ENCODE measurements at regions of chr21 and their contacts with region 1.

Region 1: GRCh38 chr21:25801217-25802014 is 66.6 kb downstream of the GABPA start:
- DNase-seq: peak; percentile 95
- ATAC-seq: peak; percentile 100
- H3K4me3 Mint-ChIP-seq: no peak overlapping the region
- H3K27ac Mint-ChIP-seq: no peak overlapping the region
- H3K4me1 Mint-ChIP-seq: peaks cover 5% of the 10 kb centered on the region
- H3K27me3 Mint-ChIP-seq: peaks cover 6% of the 10 kb centered on the region

Region 2: GRCh38 chr21:25639551-25640201 is 161.7 kb before region 1 on chr21:
- CTCF ChIA-PET with region 1: interaction called, 5 read pairs
- POLR2A ChIA-PET with region 1: no interaction called
- intact Hi-C with region 1: loop called in 1 of 2 experiments (anchors 10 kb)
- DNase-seq: peak; percentile 63
- ATAC-seq: peak; percentile 76
- H3K4me3 Mint-ChIP-seq: peak overlapping the region; percentile 62
- H3K27ac Mint-ChIP-seq: no peak overlapping the region
- H3K4me1 Mint-ChIP-seq: peaks cover 28% of the 10 kb centered on the region
- H3K27me3 Mint-ChIP-seq: peaks cover 47% of the 10 kb centered on the region

Region 3: GRCh38 chr21:25734904-25735645 is 66.3 kb before region 1 on chr21 and contains the starts of genes ATP5PF and GABPA:
- CTCF ChIA-PET with region 1: interaction called, 12 read pairs
- POLR2A ChIA-PET with region 1: no interaction called
- intact Hi-C with region 1: loop called (anchors 1 to 2 kb)
- DNase-seq: peak; percentile 99
- ATAC-seq: peak; percentile 94
- H3K4me3 Mint-ChIP-seq: peak within 1 kb of the TSS; percentile 98
- H3K27ac Mint-ChIP-seq: peak within 1 kb of the TSS; percentile 100
- H3K4me1 Mint-ChIP-seq: peaks cover 48% of the 10 kb centered on the region
- H3K27me3 Mint-ChIP-seq: no peaks in the 10 kb centered on the region
- total RNA-seq, gene ATP5PF: 154 to 165 TPM
- total RNA-seq, gene GABPA: 18.7 to 25.3 TPM

Region 4: DNA sequence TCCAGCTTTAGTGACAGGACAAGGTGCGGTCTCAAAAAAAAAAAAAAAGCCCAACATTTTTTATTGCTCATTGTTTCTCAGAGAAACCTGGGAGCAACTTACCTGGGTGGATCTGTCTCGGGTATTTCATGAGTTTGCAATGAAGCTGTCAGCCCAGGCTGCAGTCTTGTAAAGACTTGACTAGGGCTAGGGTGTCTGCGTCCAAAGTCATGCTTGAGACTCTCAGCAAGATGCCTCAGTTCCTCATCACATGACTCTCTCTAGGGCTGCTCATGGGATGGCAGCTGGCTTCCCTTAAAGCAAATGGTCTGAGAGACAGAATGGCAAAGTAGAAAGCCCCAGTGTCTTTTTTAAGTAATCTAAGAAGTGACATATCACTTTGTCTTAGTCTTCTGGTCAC is 58.5 kb before region 1 on chr21:
- CTCF ChIA-PET with region 1: interaction called, 12 read pairs
- POLR2A ChIA-PET with region 1: no interaction called
- intact Hi-C with region 1: no loop called
- DNase-seq: no peak
- ATAC-seq: no peak
- H3K4me3 Mint-ChIP-seq: no peak overlapping the region
- H3K27ac Mint-ChIP-seq: no peak overlapping the region
- H3K4me1 Mint-ChIP-seq: peaks cover 17% of the 10 kb centered on the region
- H3K27me3 Mint-ChIP-seq: no peaks in the 10 kb centered on the region

Region 5: GRCh38 chr21:25790122-25790877 is 11.1 kb before region 1 on chr21:
- CTCF ChIA-PET with region 1: interaction called, 25 read pairs
- POLR2A ChIA-PET with region 1: no interaction called
- intact Hi-C with region 1: no loop called
- DNase-seq: peak; percentile 19
- ATAC-seq: peak; percentile 88
- H3K4me3 Mint-ChIP-seq: peak overlapping the region; percentile 58
- H3K27ac Mint-ChIP-seq: peak overlapping the region; percentile 66
- H3K4me1 Mint-ChIP-seq: peaks cover 9% of the 10 kb centered on the region
- H3K27me3 Mint-ChIP-seq: peaks cover 11% of the 10 kb centered on the region

Region 6: DNA sequence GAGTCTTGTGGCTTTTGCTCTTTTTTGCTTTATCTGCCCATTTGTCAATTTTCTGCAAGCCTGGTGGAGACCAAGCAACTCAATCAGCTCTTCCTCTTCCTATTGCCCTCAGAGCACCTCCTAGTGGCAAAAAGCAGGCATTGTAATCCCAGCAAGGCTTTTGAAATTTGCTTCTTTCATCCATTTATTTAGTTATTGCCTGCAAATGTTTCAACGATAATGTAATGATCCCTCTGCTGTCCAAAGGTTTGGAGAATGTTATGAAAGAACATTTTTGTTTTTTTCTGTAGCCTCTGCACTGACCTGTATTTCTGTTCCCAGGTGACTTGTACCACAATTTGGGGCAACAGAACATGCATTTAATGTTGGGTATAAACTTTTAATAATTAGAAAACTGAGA is 61.2 kb after region 1 on chr21:
- CTCF ChIA-PET with region 1: interaction called, 9 read pairs
- POLR2A ChIA-PET with region 1: no interaction called
- intact Hi-C with region 1: loop called in 1 of 2 experiments (anchors 5 kb)
- DNase-seq: peak; percentile 41
- ATAC-seq: peak; percentile 53
- H3K4me3 Mint-ChIP-seq: no peak overlapping the region
- H3K27ac Mint-ChIP-seq: no peak overlapping the region
- H3K4me1 Mint-ChIP-seq: no peaks in the 10 kb centered on the region
- H3K27me3 Mint-ChIP-seq: no peaks in the 10 kb centered on the region